ENCODE measurements at regions of chr18 and their contacts with region 1.

Region 1: DNA sequence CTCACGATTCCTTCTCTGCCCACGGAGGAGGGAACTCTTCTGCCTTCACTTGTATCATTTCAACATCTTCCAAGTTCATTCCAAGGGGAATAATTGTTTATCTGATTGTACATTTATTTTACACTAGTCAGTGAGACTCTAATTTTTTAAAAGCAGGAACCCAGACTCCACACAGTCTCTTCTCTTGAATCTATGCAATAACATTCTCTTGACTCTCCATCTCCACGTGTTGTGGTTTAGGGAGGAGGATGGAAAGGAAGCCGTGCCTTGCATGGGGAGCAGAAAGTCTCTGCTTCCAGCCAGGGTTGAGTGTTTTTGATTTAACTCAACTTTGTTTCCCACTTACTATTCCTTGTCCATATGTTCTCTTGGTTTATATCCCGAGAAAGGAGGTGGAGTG is 131.1 kb upstream of the RIOK3 start:
- DNase-seq: no peak
- ATAC-seq: no peak
- H3K4me3 ChIP-seq: no peak overlapping the region
- H3K27ac ChIP-seq: no peak overlapping the region
- H3K4me1 ChIP-seq: no peaks in the 10 kb centered on the region; the same call in 1 of the 2 replicates
- H3K27me3 ChIP-seq: no peaks in the 10 kb centered on the region
- CTCF ChIP-seq: no peak
- EP300 ChIP-seq: no peak
- POLR2A ChIP-seq: no peak
- RAD21 ChIP-seq: no peak

Region 2: GRCh38 chr18:23307567-23308295 is 14.3 kb before region 1 on chr18:
- CTCF ChIA-PET with region 1: interaction called, 3 read pairs
- POLR2A ChIA-PET with region 1: interaction called, 9 read pairs
- RAD21 ChIA-PET with region 1: interaction called, 7 read pairs
- SMC1A ChIA-PET with region 1: interaction called, 10 read pairs
- in situ Hi-C with region 1: no loop called
- intact Hi-C with region 1: no loop called
- DNase-seq: peak; percentile 39
- ATAC-seq: peak; percentile 78
- H3K4me3 ChIP-seq: no peak overlapping the region
- H3K27ac ChIP-seq: peak overlapping the region; percentile 47
- H3K4me1 ChIP-seq: peaks cover 20% of the 10 kb centered on the region
- H3K27me3 ChIP-seq: no peaks in the 10 kb centered on the region
- CTCF ChIP-seq: no peak
- EP300 ChIP-seq: 0 out of 4 replicates have a peak, but pooled peaks of 1 of the 2 experiments have one; percentile 34
- POLR2A ChIP-seq: no peak
- RAD21 ChIP-seq: no peak